ENCODE measurements at regions of chr11 and their contacts with region 1.

Region 1: GRCh38 chr11:62787005-62787759 is at the start of gene TMEM179B:
- DNase-seq: peak; percentile 99
- ATAC-seq: peak; percentile 74
- H3K4me3 Mint-ChIP-seq: peak within 1 kb of the TSS; percentile 91
- H3K27ac Mint-ChIP-seq: peak within 1 kb of the TSS; percentile 99
- H3K4me1 Mint-ChIP-seq: peaks cover 33% of the 10 kb centered on the region
- H3K27me3 Mint-ChIP-seq: no peaks in the 10 kb centered on the region; the same call in 1 of the 2 replicates
- CTCF ChIP-seq: no peak
- total RNA-seq, gene TMEM179B: 21.4 to 23.6 TPM (median 22.2 TPM) in 3 replicates

Region 2: GRCh38 chr11:62689421-62690183 is 97.6 kb before region 1 on chr11 and contains the start of gene LRRN4CL:
- CTCF ChIA-PET with region 1: interaction called, 10 read pairs
- POLR2A ChIA-PET with region 1: no interaction called
- DNase-seq: no peak
- ATAC-seq: no peak
- H3K4me3 Mint-ChIP-seq: no peak within 1 kb of the TSS
- H3K27ac Mint-ChIP-seq: peak within 1 kb of the TSS; percentile 89
- H3K4me1 Mint-ChIP-seq: peaks cover 9% of the 10 kb centered on the region; the same call in 1 of the 2 replicates
- H3K27me3 Mint-ChIP-seq: no peaks in the 10 kb centered on the region
- CTCF ChIP-seq: no peak
- total RNA-seq, gene LRRN4CL: 0.16 to 0.39 TPM (median 0.23 TPM) in 3 replicates

Region 3: GRCh38 chr11:62753736-62754603 is 33.2 kb before region 1 on chr11 and contains the start of gene ZBTB3:
- CTCF ChIA-PET with region 1: interaction called, 52 read pairs
- POLR2A ChIA-PET with region 1: interaction called, 17 read pairs
- DNase-seq: peak; percentile 97
- ATAC-seq: peak; percentile 91
- H3K4me3 Mint-ChIP-seq: peak within 1 kb of the TSS; percentile 95
- H3K27ac Mint-ChIP-seq: peak within 1 kb of the TSS; percentile 99
- H3K4me1 Mint-ChIP-seq: peaks cover 28% of the 10 kb centered on the region
- H3K27me3 Mint-ChIP-seq: no peaks in the 10 kb centered on the region; the same call in 1 of the 2 replicates
- CTCF ChIP-seq: no peak
- total RNA-seq, gene ZBTB3: 82.3 to 88.1 TPM (median 88.0 TPM) in 3 replicates

Region 4: DNA sequence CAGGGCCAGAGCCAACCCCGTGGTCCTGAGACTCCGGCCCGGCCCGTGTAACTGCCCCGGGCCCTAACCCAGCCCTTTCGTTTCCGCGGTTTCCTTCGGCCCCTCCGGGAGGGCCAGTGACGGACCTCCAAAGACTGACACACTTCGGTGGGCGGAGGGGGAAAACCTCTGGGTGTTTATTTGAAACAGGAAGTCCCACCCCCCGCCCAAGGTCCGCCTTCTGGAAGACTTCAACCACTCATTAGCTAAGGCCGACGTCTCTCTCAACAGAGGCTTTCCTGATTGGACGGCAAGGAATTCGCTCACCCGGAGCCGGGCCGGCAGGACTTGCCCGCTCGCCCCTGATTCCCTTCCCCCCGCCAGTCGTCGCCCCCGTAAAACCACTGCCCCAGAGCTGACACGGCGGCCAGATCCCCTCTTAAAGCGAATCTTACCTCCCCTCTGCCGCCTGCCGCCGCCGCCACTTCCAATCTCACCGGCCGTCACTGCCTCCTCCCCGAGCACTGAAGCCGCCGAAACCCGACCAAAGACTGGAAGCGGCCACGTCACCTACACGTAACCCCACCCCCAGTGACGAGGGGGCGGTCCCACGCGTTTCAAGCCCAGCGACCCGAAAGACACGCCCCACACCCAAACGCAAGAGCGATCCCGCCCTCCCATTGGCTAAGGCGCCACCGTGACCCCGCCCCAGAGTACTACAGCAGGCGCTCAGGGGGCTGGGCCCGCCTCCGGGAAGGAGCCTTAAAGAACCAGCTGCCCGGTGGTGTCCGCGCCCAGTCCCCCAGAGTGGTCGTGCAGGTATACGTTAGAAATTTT is 44.5 kb after region 1 on chr11 and contains the start of gene STX5:
- CTCF ChIA-PET with region 1: interaction called, 22 read pairs
- POLR2A ChIA-PET with region 1: interaction called, 9 read pairs
- DNase-seq: peak; percentile 100
- ATAC-seq: peak; percentile 91
- H3K4me3 Mint-ChIP-seq: peak within 1 kb of the TSS; percentile 100
- H3K27ac Mint-ChIP-seq: peak within 1 kb of the TSS; percentile 100
- H3K4me1 Mint-ChIP-seq: peaks cover 16% of the 10 kb centered on the region
- H3K27me3 Mint-ChIP-seq: no peaks in the 10 kb centered on the region
- CTCF ChIP-seq: no peak
- total RNA-seq, gene STX5: 27.2 to 30.2 TPM (median 28.0 TPM) in 3 replicates

Region 5: GRCh38 chr11:62860835-62861563 is 73.8 kb after region 1 on chr11:
- CTCF ChIA-PET with region 1: interaction called, 17 read pairs
- POLR2A ChIA-PET with region 1: interaction called, 13 read pairs
- DNase-seq: no peak
- ATAC-seq: no peak
- H3K4me3 Mint-ChIP-seq: no peak overlapping the region; the same call in 1 of the 2 replicates
- H3K27ac Mint-ChIP-seq: peak overlapping the region; percentile 96
- H3K4me1 Mint-ChIP-seq: peaks cover 62% of the 10 kb centered on the region
- H3K27me3 Mint-ChIP-seq: no peaks in the 10 kb centered on the region
- CTCF ChIP-seq: no peak

Region 6: DNA sequence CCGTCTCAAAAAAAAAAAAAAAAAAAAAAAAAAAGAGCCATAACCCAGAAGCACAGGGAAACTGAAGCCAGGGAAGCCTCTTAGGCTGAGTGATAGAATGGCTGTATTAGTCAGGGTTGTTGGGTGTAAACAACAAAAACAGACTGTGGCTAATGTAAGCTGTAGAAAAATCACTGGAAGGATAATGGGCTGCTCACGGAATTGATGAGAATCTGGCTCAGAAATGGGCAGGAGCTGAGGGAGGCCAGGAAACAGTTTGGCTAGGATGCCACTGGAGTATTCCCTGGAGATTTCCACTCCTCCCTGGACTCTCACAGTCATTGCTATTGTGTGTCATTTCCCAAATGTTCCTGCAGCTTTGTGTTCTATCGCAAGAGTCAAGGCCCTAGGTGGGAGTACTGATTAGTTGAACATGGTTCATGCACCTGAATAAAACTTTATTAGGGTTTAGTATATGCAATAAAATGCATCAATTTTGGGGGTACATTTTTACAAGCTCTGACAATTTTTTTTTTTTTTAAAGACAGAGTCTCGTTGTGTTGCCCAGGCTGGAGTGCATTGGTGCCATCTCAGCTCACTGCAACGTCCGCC is 175.3 kb after region 1 on chr11:
- CTCF ChIA-PET with region 1: no interaction called
- POLR2A ChIA-PET with region 1: no interaction called
- DNase-seq: no peak
- ATAC-seq: no peak
- H3K4me3 Mint-ChIP-seq: no peak overlapping the region
- H3K27ac Mint-ChIP-seq: no peak overlapping the region
- H3K4me1 Mint-ChIP-seq: no peaks in the 10 kb centered on the region
- H3K27me3 Mint-ChIP-seq: peaks cover 13% of the 10 kb centered on the region
- CTCF ChIP-seq: no peak